BJ (cell line): ENCODE measurements at regions of chr12 and their contacts with region 1.

Region 1: GRCh38 chr12:100778967-100779590 is 15.5 kb upstream of the ANO4 start:
- DNase-seq: no peak
- H3K4me3 ChIP-seq: no peak overlapping the region
- H3K27me3 ChIP-seq: no peaks in the 10 kb centered on the region
- CTCF ChIP-seq: no peak

Region 2: DNA sequence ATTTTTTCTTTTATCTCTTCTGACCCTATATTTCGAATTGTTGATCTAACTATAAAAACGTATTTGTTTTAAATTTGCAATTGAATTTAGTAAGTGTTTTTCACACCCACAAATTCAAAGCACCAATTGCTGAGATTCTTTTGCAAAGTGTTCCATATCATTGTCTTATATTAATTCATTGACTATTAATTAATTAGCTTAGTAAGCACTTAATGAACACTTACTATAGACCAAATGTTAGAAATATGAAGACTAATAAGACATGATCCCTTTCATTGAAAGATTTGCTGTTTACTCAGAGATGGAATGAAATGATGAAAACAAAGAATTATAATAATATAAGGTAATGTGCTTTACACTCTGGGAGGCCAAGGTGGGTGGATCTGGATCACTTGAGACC is 29.7 kb after region 1 on chr12:
- CTCF ChIA-PET with region 1: no interaction called
- POLR2A ChIA-PET with region 1: interaction called, 10 read pairs
- DNase-seq: no peak
- H3K4me3 ChIP-seq: no peak overlapping the region
- H3K27me3 ChIP-seq: no peaks in the 10 kb centered on the region
- CTCF ChIP-seq: no peak